ENCODE measurements at regions of chr9 and their contacts with region 1.

Region 1: DNA sequence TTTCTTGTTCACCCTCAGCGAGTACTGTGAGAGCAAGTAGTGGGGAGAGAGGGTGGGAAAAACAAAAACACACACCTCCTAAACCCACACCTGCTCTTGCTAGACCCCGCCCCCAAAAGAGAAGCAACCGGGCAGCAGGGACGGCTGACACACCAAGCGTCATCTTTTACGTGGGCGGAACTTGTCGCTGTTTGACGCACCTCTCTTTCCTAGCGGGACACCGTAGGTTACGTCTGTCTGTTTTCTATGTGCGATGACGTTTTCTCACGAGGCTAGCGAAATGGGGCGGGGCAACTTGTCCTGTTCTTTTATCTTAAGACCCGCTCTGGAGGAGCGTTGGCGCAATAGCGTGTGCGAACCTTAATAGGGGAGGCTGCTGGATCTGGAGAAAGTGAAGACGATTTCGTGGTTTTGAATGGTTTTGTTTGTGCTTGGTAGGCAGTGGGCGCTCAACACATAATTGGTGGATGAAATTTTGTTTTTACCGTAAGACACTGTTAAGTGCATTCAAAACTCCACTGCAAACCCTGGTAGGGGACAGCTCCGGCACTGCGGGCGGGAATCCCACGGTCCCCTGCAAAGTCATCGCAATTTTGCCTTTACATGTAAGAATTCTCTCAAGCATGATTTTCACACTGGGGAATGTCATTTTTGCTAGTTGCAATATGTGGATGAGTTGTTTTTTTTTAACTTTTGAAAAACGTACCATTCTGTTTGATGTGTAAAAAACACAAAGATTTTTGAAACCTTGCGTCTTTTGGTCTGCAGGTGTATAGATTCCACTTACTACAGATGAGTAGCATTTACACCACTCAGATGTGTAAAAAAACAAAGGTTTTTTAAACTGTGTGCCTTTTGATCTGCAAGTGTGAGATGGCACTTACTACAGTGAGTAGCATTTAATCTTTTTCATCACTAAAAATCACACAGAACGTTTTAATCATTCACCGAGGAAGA is 631 bp upstream of the C9orf72 start:
- DNase-seq: peak; percentile 98
- ATAC-seq: peak; percentile 91
- H3K4me3 ChIP-seq: peak overlapping the region; percentile 84 to 99 (median 92)
- H3K27ac ChIP-seq: peak overlapping the region; percentile 95 to 100 (median 100)
- H3K4me1 ChIP-seq: peaks cover 17 to 19% of the 10 kb centered on the region in 2 donors
- H3K27me3 ChIP-seq: no peaks in the 10 kb centered on the region
- CTCF ChIP-seq: no peak
- POLR2A ChIP-seq: peak; percentile 79 to 84

Region 2: DNA sequence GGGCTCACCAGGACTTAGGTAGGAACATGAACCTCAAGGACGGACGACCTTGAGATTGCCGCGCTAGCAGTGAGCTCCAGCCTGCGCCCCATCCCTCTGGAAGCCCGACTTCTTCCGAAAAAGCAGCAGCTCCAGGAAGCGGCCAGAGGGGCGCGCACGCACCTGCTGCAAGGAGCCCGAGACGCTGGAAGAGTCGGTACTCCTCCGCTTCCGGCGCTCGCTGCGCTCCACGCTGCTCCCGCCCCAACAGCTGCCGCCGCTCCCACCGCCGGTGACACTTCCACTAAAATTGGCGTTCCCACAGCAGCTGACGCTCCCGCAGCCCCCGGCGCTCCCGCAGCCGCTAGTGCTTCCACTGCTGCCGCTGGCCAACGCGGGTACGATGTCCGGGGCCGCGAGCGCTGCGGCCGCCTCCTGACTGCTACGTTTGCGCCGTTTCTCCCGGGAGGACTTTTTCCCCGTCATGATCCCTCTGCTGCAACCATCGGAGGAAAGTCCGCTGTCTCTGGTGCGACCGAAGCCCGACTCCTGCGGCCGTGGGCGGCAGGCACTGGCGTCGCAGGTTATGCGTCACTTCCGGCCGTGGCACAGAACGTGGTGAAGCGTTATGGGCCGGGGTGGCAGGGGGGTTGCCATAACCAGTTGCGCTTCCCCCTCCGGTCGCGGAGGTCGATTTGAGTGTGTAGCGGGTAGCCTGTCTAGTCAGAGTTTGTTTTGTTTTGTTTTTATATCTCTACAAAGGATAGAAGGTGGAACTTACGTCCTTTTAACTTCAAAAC is 681.5 kb before region 1 on chr9 and contains the start of gene CAAP1:
- in situ Hi-C with region 1: no loop called
- intact Hi-C with region 1: loop called (anchors 1 kb)
- DNase-seq: peak; percentile 87 to 90
- ATAC-seq: peak; percentile 97
- H3K4me3 ChIP-seq: peak within 1 kb of the TSS; percentile 83 to 100 (median 92)
- H3K27ac ChIP-seq: peak within 1 kb of the TSS; percentile 92 to 96 (median 96)
- H3K4me1 ChIP-seq: peaks cover 23 to 32% of the 10 kb centered on the region in 2 donors
- H3K27me3 ChIP-seq: no peaks in the 10 kb centered on the region
- CTCF ChIP-seq: peak in 4 of 5 experiments; percentile 24 to 42 (median 28)
- POLR2A ChIP-seq: peak; percentile 65 to 68
- total RNA-seq, gene CAAP1: 4.5 to 12.3 (median 6.8) TPM

Region 3: DNA sequence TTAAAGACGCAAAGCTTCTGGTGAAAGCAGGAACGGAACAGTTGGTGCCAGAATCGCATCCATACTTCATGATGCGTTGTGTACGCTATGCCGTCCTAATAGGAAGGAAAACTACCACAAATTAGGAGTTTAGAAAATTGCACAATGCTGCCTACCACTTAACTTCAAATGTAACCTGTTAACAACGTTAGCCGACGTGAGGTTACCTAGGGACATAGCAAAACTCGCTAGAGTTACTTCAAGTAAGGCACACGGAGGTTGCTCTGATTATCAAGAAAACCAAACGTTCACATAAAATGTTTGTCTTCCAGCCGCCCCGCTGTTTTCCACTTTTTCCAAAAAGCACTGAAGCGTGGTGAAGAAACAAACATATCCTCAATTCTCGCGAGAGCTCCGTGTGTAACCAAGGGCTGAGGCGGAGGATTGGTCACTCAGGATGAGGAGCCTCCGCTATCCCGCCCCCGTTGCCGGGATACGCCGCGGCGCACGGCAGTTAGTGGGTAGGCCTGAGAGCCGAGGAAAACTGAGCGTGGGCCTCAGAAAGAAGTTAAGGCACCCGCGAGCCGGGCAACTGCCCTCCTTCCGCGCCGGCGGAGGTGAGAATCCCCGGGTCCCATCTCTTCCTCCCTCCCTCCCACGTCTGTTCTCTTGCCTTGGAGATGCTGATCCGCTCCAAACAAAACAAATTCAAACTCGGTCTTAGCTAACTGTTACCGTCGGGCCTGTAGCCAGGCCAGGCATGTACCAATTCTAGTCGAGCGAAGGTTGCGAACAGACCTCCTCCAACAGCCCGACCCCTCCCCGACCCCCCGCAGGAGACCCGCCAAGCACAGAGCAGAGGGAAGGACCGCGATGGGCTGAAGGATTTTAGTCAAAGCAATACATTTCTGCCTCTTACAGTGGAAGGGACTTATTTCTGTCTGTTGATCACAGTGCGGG is 617.7 kb before region 1 on chr9 and contains the start of gene IFT74:
- in situ Hi-C with region 1: loop called in 1 of 4 experiments (anchors 10 kb)
- intact Hi-C with region 1: no loop called
- DNase-seq: peak; percentile 96 to 97
- ATAC-seq: peak; percentile 99
- H3K4me3 ChIP-seq: peak within 1 kb of the TSS; percentile 61 to 74 (median 70)
- H3K27ac ChIP-seq: peak within 1 kb of the TSS; percentile 82 to 90 (median 85)
- H3K4me1 ChIP-seq: peaks cover 14 to 18% of the 10 kb centered on the region in 2 donors
- H3K27me3 ChIP-seq: no peaks in the 10 kb centered on the region
- CTCF ChIP-seq: no peak
- POLR2A ChIP-seq: peak; percentile 23 to 60
- total RNA-seq, gene IFT74: 4.9 to 15.2 (median 13.0) TPM

Region 4: GRCh38 chr9:27276193-27277030 is 297.5 kb before region 1 on chr9:
- in situ Hi-C with region 1: no loop called
- intact Hi-C with region 1: loop called (anchors 10 kb)
- DNase-seq: no peak
- ATAC-seq: peak; percentile 50 to 62
- H3K4me3 ChIP-seq: peak overlapping the region in 1 of 4 donors; percentile 16
- H3K27ac ChIP-seq: no peak overlapping the region
- H3K4me1 ChIP-seq: peaks cover 0 to 3% of the 10 kb centered on the region in 2 donors
- H3K27me3 ChIP-seq: no peaks in the 10 kb centered on the region
- CTCF ChIP-seq: peak; percentile 65 to 81 (median 72)
- POLR2A ChIP-seq: no peak

Region 5: GRCh38 chr9:27460226-27461023 is 113.5 kb before region 1 on chr9:
- in situ Hi-C with region 1: loop called in 1 of 4 experiments (anchors 25 kb)
- intact Hi-C with region 1: no loop called
- DNase-seq: no peak
- ATAC-seq: peak in 1 of 2 donors; percentile 30
- H3K4me3 ChIP-seq: no peak overlapping the region
- H3K27ac ChIP-seq: no peak overlapping the region
- H3K4me1 ChIP-seq: peaks cover 10 to 21% of the 10 kb centered on the region in 2 donors
- H3K27me3 ChIP-seq: no peaks in the 10 kb centered on the region
- CTCF ChIP-seq: no peak
- POLR2A ChIP-seq: no peak

Region 6: GRCh38 chr9:27529316-27530278 is 44.3 kb before region 1 on chr9 and contains the start of gene MOB3B:
- in situ Hi-C with region 1: no loop called
- intact Hi-C with region 1: loop called (anchors 5 kb)
- DNase-seq: peak; percentile 61 to 73
- ATAC-seq: peak; percentile 69 to 79
- H3K4me3 ChIP-seq: peak within 1 kb of the TSS; percentile 72 to 91 (median 86)
- H3K27ac ChIP-seq: peak within 1 kb of the TSS; percentile 86 to 90 (median 88)
- H3K4me1 ChIP-seq: peaks cover 15 to 17% of the 10 kb centered on the region in 2 donors
- H3K27me3 ChIP-seq: no peaks in the 10 kb centered on the region
- CTCF ChIP-seq: peak; percentile 88 to 99 (median 97)
- POLR2A ChIP-seq: peak; percentile 37 to 78
- total RNA-seq, gene MOB3B: 3.4 to 16.3 (median 12.7) TPM

Region 7: DNA sequence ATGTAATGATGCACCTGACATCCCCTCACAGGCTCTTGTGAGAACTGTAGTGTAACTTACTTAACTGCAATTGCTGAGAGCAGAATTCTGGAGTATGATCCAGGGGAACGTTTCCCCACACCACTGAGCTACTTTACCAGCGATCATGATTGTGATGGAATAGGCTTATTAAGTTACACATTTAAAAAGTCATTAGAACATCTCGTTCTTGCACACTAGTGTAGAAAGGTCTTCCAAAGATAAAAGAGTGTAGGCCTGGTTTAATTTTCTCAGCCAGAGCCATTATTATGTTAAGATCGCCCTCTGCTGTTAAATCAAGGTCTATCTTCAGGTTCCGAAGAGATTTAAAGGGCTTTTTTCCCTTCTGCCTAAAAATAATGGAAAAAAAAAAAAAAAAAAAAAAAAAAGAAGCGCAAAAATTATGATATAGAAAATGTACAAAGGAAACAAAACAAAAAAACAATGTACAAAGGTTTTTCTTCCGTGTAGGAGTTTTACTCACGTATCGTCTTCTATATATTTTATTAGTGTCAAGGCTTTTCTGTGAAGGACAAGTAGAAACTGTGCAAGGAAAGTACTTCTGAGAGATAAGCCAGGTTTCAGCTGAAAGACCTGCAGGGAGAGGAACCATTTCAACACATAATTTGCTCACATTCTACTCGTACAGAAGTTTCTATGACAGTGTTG is 25.7 kb before region 1 on chr9:
- in situ Hi-C with region 1: no loop called
- intact Hi-C with region 1: loop called (anchors 2 kb)
- DNase-seq: peak; percentile 51 to 69
- ATAC-seq: peak; percentile 95 to 96
- H3K4me3 ChIP-seq: no peak overlapping the region
- H3K27ac ChIP-seq: peak overlapping the region; percentile 79 to 86 (median 84)
- H3K4me1 ChIP-seq: peaks cover 14 to 24% of the 10 kb centered on the region in 2 donors
- H3K27me3 ChIP-seq: no peaks in the 10 kb centered on the region
- CTCF ChIP-seq: peak; percentile 38 to 58 (median 54)
- POLR2A ChIP-seq: peak in 1 of 2 donors; percentile 59

Region 8: GRCh38 chr9:28317745-28318144 is 743.8 kb after region 1 on chr9:
- in situ Hi-C with region 1: no loop called
- intact Hi-C with region 1: no loop called
- DNase-seq: no peak
- ATAC-seq: no peak
- H3K4me3 ChIP-seq: no peak overlapping the region
- H3K27ac ChIP-seq: no peak overlapping the region
- H3K4me1 ChIP-seq: no peaks in the 10 kb centered on the region
- H3K27me3 ChIP-seq: no peaks in the 10 kb centered on the region
- CTCF ChIP-seq: no peak
- POLR2A ChIP-seq: no peak